ENCODE measurements at regions of chr5 and their contacts with region 1.

Region 1: GRCh38 chr5:68215208-68215897 is at the start of gene PIK3R1:
- DNase-seq: peak; percentile 86 to 96 (median 93)
- ATAC-seq: peak; percentile 91
- H3K4me3 ChIP-seq: peak within 1 kb of the TSS; percentile 73
- H3K4me3 Mint-ChIP-seq: peak within 1 kb of the TSS; percentile 84 to 94 (median 92)
- H3K27ac ChIP-seq: peak within 1 kb of the TSS; percentile 89
- H3K27ac Mint-ChIP-seq: peak within 1 kb of the TSS; percentile 85 to 97 (median 94)
- H3K4me1 ChIP-seq: peaks cover 16 to 18% of the 10 kb centered on the region in 2 donors
- H3K4me1 Mint-ChIP-seq: peaks cover 35 to 46% (median 44%) of the 10 kb centered on the region in 7 donors
- H3K27me3 ChIP-seq: no peaks in the 10 kb centered on the region
- H3K27me3 Mint-ChIP-seq: no peaks in the 10 kb centered on the region
- total RNA-seq, gene PIK3R1: 72.0 to 207 (median 131) TPM

Region 2: DNA sequence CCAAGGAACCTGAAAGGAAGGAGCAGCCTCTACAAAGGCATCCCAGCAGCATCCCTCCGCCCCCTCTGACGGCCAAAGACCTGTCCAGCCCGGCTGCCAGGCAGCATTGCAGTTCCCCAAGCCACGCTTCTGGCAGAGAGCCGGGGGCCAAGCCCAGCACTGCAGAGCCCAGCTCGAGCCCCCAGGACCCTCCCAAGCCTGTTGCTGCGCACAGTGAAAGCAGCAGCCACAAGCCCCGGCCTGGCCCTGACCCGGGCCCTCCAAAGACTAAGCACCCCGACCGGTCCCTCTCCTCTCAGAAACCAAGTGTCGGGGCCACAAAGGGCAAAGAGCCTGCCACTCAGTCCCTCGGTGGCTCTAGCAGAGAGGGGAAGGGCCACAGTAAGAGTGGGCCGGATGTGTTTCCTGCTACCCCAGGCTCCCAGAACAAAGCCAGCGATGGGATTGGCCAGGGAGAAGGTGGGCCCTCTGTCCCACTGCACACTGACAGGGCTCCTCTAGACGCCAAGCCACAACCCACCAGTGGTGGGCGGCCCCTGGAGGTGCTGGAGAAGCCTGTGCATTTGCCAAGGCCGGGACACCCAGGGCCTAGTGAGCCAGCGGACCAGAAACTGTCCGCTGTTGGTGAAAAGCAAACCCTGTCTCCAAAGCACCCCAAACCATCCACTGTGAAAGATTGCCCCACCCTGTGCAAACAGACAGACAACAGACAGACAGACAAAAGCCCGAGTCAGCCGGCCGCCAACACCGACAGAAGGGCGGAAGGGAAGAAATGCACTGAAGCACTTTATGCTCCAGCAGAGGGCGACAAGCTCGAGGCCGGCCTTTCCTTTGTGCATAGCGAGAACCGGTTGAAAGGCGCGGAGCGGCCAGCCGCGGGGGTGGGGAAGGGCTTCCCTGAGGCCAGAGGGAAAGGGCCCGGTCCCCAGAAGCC is 1049.6 kb before region 1 on chr5:
- CTCF ChIA-PET with region 1: no interaction called
- POLR2A ChIA-PET with region 1: interaction called, 4 read pairs
- intact Hi-C with region 1: loop called (anchors 2 to 10 kb)
- DNase-seq: peak; percentile 56 to 78 (median 70)
- ATAC-seq: peak; percentile 88
- H3K4me3 ChIP-seq: peak overlapping the region; percentile 54
- H3K4me3 Mint-ChIP-seq: peak overlapping the region; percentile 84 to 96 (median 88)
- H3K27ac ChIP-seq: peak overlapping the region; percentile 80
- H3K27ac Mint-ChIP-seq: peak overlapping the region in 8 of 9 donors; percentile 96 to 100 (median 98)
- H3K4me1 ChIP-seq: peaks cover 71 to 73% of the 10 kb centered on the region in 2 donors
- H3K4me1 Mint-ChIP-seq: peaks cover 36 to 83% (median 62%) of the 10 kb centered on the region in 7 donors
- H3K27me3 ChIP-seq: no peaks in the 10 kb centered on the region
- H3K27me3 Mint-ChIP-seq: no peaks in the 10 kb centered on the region

Region 3: GRCh38 chr5:68239487-68239886 is 24.1 kb after region 1 on chr5:
- CTCF ChIA-PET with region 1: interaction called, 5 read pairs
- POLR2A ChIA-PET with region 1: interaction called, 28 read pairs
- intact Hi-C with region 1: loop called (anchors 1 kb)
- DNase-seq: peak; percentile 50 to 91 (median 86)
- ATAC-seq: peak; percentile 98
- H3K4me3 ChIP-seq: no peak overlapping the region
- H3K4me3 Mint-ChIP-seq: peak overlapping the region; percentile 11 to 84 (median 70)
- H3K27ac ChIP-seq: peak overlapping the region; percentile 70
- H3K27ac Mint-ChIP-seq: peak overlapping the region; percentile 69 to 98 (median 87)
- H3K4me1 ChIP-seq: peaks cover 41 to 51% of the 10 kb centered on the region in 2 donors
- H3K4me1 Mint-ChIP-seq: peaks cover 52 to 93% (median 90%) of the 10 kb centered on the region in 7 donors
- H3K27me3 ChIP-seq: no peaks in the 10 kb centered on the region
- H3K27me3 Mint-ChIP-seq: no peaks in the 10 kb centered on the region

Region 4: DNA sequence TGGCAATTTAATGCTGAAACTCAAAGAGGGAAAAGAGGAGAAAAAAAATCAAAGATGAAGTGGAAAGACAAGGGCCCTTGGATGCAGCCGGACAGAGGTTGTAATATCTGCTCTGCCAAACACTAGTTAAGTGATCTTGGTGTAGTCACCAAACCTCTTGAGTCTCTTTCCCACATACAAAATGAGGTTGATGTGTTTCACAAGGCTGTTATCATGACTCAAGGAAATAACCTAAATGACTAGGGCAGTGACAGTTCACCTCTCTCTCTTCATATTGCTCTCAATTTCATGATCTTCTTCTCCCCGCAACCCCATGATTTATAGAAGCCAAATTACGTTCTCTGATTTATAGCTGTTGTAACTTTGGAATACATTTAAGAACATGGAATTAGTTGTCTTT is 45.1 kb after region 1 on chr5:
- CTCF ChIA-PET with region 1: no interaction called
- POLR2A ChIA-PET with region 1: interaction called, 13 read pairs
- intact Hi-C with region 1: loop called in 1 of 2 experiments (anchors 1 kb)
- DNase-seq: no peak
- ATAC-seq: no peak
- H3K4me3 ChIP-seq: no peak overlapping the region
- H3K4me3 Mint-ChIP-seq: peak overlapping the region in 3 of 10 donors; percentile 16 to 76 (median 19)
- H3K27ac ChIP-seq: no peak overlapping the region
- H3K27ac Mint-ChIP-seq: peak overlapping the region in 8 of 9 donors; percentile 23 to 95 (median 76)
- H3K4me1 ChIP-seq: peaks cover 64 to 81% of the 10 kb centered on the region in 2 donors
- H3K4me1 Mint-ChIP-seq: peaks cover 53 to 91% (median 90%) of the 10 kb centered on the region in 7 donors
- H3K27me3 ChIP-seq: no peaks in the 10 kb centered on the region
- H3K27me3 Mint-ChIP-seq: no peaks in the 10 kb centered on the region

Region 5: GRCh38 chr5:68433923-68434879 is 218.8 kb after region 1 on chr5:
- CTCF ChIA-PET with region 1: no interaction called
- POLR2A ChIA-PET with region 1: no interaction called
- intact Hi-C with region 1: loop called (anchors 1 to 2 kb)
- DNase-seq: peak; percentile 45 to 91 (median 68)
- ATAC-seq: peak; percentile 94
- H3K4me3 ChIP-seq: peak overlapping the region; percentile 36
- H3K4me3 Mint-ChIP-seq: peak overlapping the region; percentile 37 to 81 (median 76)
- H3K27ac ChIP-seq: no peak overlapping the region
- H3K27ac Mint-ChIP-seq: peak overlapping the region; percentile 52 to 92 (median 76)
- H3K4me1 ChIP-seq: peaks cover 17 to 23% of the 10 kb centered on the region in 2 donors
- H3K4me1 Mint-ChIP-seq: peaks cover 23 to 45% (median 34%) of the 10 kb centered on the region in 7 donors
- H3K27me3 ChIP-seq: no peaks in the 10 kb centered on the region
- H3K27me3 Mint-ChIP-seq: peaks cover 0 to 63% (median 0%) of the 10 kb centered on the region in 5 donors

Region 6: DNA sequence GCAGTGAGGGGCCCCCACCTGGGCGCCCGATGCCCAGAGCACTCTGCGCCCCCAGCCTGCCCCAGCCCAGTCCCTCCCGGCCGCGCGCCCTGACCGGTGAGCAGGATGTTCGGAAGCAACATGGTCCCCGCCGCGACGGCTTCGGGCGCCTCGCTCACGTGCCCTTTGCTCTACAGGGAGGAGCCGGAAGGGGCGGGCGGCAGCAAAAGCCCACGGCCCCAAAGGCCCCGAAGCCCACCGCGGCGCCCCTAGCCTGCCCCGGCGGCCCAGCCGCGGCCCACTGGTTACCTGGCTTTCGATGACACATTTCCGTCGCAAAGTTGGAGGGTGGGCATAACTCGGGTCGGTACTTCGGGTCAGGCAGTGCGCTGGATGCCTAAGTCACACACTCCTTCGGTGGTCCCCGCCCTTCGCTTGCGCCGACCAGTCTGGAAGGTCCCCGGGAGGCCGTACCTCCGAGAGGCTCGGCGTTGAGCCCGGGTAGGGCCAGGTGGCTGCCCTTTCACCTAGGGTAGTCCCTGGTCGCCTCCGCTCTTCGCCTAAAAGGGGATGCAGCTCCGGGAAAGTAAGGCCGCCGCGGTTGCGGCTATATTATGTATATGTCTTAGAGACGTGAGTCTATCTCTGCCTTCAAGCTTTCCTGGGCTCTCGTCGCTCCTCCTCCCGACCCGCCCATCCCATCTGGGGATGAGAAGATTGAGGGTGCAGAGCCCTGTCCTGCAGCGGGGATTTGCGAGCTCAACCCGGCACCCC is 1154.2 kb after region 1 on chr5 and contains the starts of genes AK6, RAD17 and TAF9:
- CTCF ChIA-PET with region 1: no interaction called
- POLR2A ChIA-PET with region 1: no interaction called
- intact Hi-C with region 1: loop called in 1 of 2 experiments (anchors 5 kb)
- DNase-seq: peak; percentile 90 to 99 (median 95)
- ATAC-seq: peak; percentile 95
- H3K4me3 ChIP-seq: peak within 1 kb of the TSS; percentile 97
- H3K4me3 Mint-ChIP-seq: peak within 1 kb of the TSS; percentile 91 to 100 (median 97)
- H3K27ac ChIP-seq: peak within 1 kb of the TSS; percentile 99
- H3K27ac Mint-ChIP-seq: peak within 1 kb of the TSS; percentile 95 to 100 (median 99)
- H3K4me1 ChIP-seq: peaks cover 18 to 20% of the 10 kb centered on the region in 2 donors
- H3K4me1 Mint-ChIP-seq: peaks cover 20 to 63% (median 51%) of the 10 kb centered on the region in 7 donors
- H3K27me3 ChIP-seq: no peaks in the 10 kb centered on the region
- H3K27me3 Mint-ChIP-seq: no peaks in the 10 kb centered on the region
- total RNA-seq, gene AK6: 12.4 to 30.2 (median 24.0) TPM
- total RNA-seq, gene RAD17: 19.7 to 32.0 (median 26.3) TPM
- total RNA-seq, gene TAF9: 48.5 to 54.1 (median 50.4) TPM